ENCODE measurements at regions of chr9 and their contacts with region 1.

Region 1: GRCh38 chr9:115524453-115525059 is 406.6 kb upstream of the TNC start:
- DNase-seq: peak; percentile 8
- H3K4me3 ChIP-seq: no peak overlapping the region
- H3K27ac ChIP-seq: no peak overlapping the region
- H3K4me1 ChIP-seq: no peaks in the 10 kb centered on the region
- H3K27me3 ChIP-seq: no peaks in the 10 kb centered on the region
- CTCF ChIP-seq: peak; percentile 26 to 50
- POLR2A ChIP-seq: no peak

Region 2: GRCh38 chr9:114662081-114662989 is 862.2 kb before region 1 on chr9:
- CTCF ChIA-PET with region 1: no interaction called
- POLR2A ChIA-PET with region 1: no interaction called
- dilution Hi-C with region 1: no loop called
- intact Hi-C with region 1: loop called (anchors 1 kb)
- DNase-seq: peak; percentile 50
- H3K4me3 ChIP-seq: no peak overlapping the region
- H3K27ac ChIP-seq: no peak overlapping the region
- H3K4me1 ChIP-seq: no peaks in the 10 kb centered on the region
- H3K27me3 ChIP-seq: peaks cover 5 to 9% of the 10 kb centered on the region in 2 experiments
- CTCF ChIP-seq: peak; percentile 79 to 80
- POLR2A ChIP-seq: no peak

Region 3: GRCh38 chr9:115117999-115118878 is 406.3 kb before region 1 on chr9 and contains the start of gene TNC:
- CTCF ChIA-PET with region 1: no interaction called
- POLR2A ChIA-PET with region 1: no interaction called
- dilution Hi-C with region 1: no loop called
- intact Hi-C with region 1: no loop called
- DNase-seq: peak; percentile 14
- H3K4me3 ChIP-seq: no peak within 1 kb of the TSS
- H3K27ac ChIP-seq: no peak within 1 kb of the TSS
- H3K4me1 ChIP-seq: no peaks in the 10 kb centered on the region
- H3K27me3 ChIP-seq: no peaks in the 10 kb centered on the region
- CTCF ChIP-seq: no peak
- POLR2A ChIP-seq: no peak
- total RNA-seq, gene TNC: 0.29 TPM in 1 of 2 replicates, not detected in the other

Region 4: DNA sequence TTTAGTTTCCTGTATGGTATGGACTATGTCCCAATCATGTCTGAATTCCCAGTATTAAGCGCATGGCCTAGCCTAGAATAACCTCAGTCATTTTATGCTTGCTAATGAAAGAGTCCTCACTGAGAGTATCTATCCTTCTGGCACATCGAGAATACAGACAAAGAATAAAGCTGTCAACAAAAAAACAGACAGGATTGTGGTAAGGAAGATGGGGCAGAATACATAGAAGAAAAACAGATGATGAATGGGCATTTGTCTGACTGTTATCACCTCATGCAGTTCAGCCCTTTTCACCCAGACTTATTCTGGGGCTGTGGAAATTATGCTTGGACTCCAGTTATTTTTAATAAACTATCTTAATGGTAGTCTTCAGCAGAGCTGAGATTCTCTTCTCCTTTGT is 42.8 kb before region 1 on chr9:
- CTCF ChIA-PET with region 1: no interaction called
- POLR2A ChIA-PET with region 1: no interaction called
- dilution Hi-C with region 1: no loop called
- intact Hi-C with region 1: no loop called
- DNase-seq: no peak
- H3K4me3 ChIP-seq: no peak overlapping the region
- H3K27ac ChIP-seq: no peak overlapping the region
- H3K4me1 ChIP-seq: no peaks in the 10 kb centered on the region
- H3K27me3 ChIP-seq: no peaks in the 10 kb centered on the region
- CTCF ChIP-seq: no peak
- POLR2A ChIP-seq: no peak

Region 5: DNA sequence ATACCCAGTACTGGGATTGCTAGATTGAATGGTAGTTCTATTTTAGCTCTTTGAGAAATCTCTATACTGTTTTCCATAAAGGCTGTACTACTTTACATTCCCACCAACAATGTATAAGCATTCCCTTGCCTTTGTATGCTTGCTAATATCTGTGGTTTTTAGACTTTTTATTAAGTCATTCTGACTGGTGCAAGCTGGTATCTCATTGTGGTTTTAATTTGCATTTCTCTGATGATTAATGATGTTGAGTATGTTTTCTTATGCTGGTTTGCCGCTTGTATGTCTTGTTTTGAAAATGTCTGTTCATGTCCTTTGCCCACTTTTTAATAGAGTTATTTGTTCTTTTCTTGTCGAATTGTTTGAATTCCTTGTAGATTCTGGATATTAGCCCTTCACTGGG is 116.3 kb after region 1 on chr9:
- CTCF ChIA-PET with region 1: no interaction called
- POLR2A ChIA-PET with region 1: no interaction called
- dilution Hi-C with region 1: no loop called
- intact Hi-C with region 1: no loop called
- DNase-seq: no peak
- H3K4me3 ChIP-seq: no peak overlapping the region
- H3K27ac ChIP-seq: no peak overlapping the region
- H3K4me1 ChIP-seq: no peaks in the 10 kb centered on the region
- H3K27me3 ChIP-seq: no peaks in the 10 kb centered on the region
- CTCF ChIP-seq: no peak
- POLR2A ChIP-seq: no peak

Region 6: DNA sequence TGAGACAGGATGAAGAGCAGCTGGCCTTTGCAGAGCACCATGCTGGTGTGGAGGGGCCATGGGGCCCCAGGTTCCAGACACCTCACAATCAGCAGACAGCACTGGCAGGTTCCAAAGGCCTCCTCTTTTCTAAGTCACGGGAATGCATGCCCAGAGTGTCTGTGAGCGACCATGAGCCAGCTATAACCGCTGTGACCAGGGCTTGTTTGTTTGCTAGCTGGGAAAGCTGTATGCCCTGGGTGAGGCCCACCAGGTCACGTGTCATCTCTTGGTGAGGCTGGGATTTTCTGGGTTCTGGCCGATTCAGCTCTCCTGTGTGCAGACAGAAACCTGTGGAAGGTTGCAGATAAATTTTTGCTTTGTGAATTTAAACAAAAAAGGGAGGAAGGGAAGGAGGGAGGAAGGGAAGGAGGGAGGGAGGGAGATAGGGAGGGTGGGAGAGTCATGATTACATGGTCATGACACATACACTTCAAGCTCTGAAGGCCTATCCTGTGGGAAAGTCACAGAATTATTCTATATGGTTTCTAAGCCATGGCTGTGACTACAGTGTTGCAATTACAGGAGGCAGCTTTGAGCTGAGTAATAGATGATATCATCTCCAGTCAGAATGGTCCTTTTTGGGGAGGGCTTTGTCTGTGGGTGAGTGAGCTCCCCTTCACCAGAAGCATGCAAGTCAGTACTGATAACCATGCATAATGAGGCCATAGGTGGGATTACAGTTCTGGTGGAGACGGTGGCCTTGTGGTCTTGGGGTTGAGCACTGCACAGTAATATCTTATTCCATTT is 666.3 kb after region 1 on chr9:
- CTCF ChIA-PET with region 1: no interaction called
- POLR2A ChIA-PET with region 1: no interaction called
- dilution Hi-C with region 1: no loop called
- intact Hi-C with region 1: no loop called
- DNase-seq: no peak
- H3K4me3 ChIP-seq: no peak overlapping the region
- H3K27ac ChIP-seq: no peak overlapping the region
- H3K4me1 ChIP-seq: peaks cover 3% of the 10 kb centered on the region
- H3K27me3 ChIP-seq: no peaks in the 10 kb centered on the region
- CTCF ChIP-seq: no peak
- POLR2A ChIP-seq: no peak

Measured in endothelial cell of umbilical vein (primary cell).